Panc1 (cell line): ENCODE measurements at regions of chr5 and their contacts with region 1.

Region 1: GRCh38 chr5:40688127-40688761 is 8.5 kb downstream of the PTGER4 start:
- DNase-seq: peak; percentile 95
- ATAC-seq: peak; percentile 85
- H3K4me3 ChIP-seq: peak overlapping the region in 1 of 2 experiments; percentile 40; a peak in 2 of 4 replicates
- H3K27ac ChIP-seq: peak overlapping the region; percentile 90
- H3K4me1 ChIP-seq: peaks cover 62% of the 10 kb centered on the region
- H3K27me3 ChIP-seq: no peaks in the 10 kb centered on the region
- CTCF ChIP-seq: peak; percentile 86

Region 2: GRCh38 chr5:39580702-39581453 is 1107.4 kb before region 1 on chr5:
- CTCF ChIA-PET with region 1: no interaction called
- POLR2A ChIA-PET with region 1: no interaction called
- in situ Hi-C with region 1: no loop called
- intact Hi-C with region 1: loop called (anchors 5 kb)
- DNase-seq: no peak
- ATAC-seq: no peak
- H3K4me3 ChIP-seq: no peak overlapping the region
- H3K27ac ChIP-seq: no peak overlapping the region
- H3K4me1 ChIP-seq: no peaks in the 10 kb centered on the region
- H3K27me3 ChIP-seq: peaks cover 2% of the 10 kb centered on the region; the same call in 1 of the 2 replicates
- CTCF ChIP-seq: no peak

Region 3: DNA sequence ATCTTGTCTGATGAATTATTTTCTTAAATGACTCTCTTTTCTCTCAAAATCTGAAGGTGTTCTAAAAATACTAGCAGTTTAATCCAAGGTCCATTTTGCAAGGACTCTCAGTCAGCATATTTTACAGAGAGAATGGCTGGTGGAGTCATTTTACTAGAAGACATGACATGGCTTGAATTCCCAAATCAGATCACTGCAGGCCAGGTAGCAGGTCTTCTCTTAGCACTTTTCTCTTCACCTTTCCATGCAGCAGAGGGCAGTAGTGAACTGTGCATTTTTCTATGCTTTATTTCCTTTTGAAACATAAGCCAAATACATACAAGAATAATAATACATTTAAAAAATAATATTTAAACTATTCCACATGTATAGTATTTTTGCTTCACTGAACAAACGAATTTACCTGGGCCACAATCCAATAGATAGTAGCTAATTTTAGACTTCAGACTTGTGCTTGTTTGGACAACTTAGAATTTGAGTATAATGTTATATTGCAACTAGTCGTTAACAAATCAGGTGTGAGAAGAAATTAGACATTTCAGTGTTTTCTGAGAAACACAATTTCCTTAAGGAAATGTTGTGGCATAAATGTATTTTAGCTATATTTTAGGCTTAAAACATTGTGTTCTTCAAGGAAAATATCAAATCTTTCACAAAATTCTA is 974.1 kb before region 1 on chr5:
- CTCF ChIA-PET with region 1: interaction called, 4 read pairs
- POLR2A ChIA-PET with region 1: no interaction called
- in situ Hi-C with region 1: no loop called
- intact Hi-C with region 1: loop called (anchors 2 kb)
- DNase-seq: peak; percentile 99
- ATAC-seq: peak; percentile 70
- H3K4me3 ChIP-seq: no peak overlapping the region
- H3K27ac ChIP-seq: peak overlapping the region; percentile 65
- H3K4me1 ChIP-seq: peaks cover 16% of the 10 kb centered on the region
- H3K27me3 ChIP-seq: no peaks in the 10 kb centered on the region
- CTCF ChIP-seq: peak; percentile 80

Region 4: DNA sequence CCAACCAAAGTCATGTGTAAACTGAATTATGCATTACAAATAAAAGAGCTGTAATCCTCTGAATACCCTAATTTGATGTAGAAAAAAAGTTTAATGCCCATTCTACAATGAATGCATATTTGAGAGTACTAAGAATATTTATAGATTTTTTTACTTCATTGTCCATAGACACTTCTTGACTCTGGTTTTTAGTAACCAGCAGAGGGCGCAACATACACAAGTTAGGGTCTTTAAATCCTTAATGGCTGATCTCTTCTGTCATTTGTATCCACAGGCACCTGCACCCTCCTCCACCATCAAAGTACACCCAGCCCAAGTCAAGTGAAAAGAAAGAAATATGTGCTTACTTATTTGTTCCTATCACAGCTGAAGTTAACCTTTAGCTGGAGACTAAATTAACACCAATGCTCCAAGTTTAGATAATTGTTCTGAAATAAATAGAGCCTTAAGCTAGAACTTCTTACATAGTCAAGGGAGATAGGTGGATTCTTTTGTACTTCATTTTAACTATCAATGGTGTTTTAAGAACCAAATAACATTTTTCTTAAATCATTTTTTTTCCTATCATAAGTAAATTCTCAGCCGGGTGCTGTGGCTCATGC is 739.3 kb before region 1 on chr5:
- CTCF ChIA-PET with region 1: no interaction called
- POLR2A ChIA-PET with region 1: no interaction called
- in situ Hi-C with region 1: no loop called
- intact Hi-C with region 1: loop called (anchors 1 kb)
- DNase-seq: peak; percentile 73
- ATAC-seq: peak; percentile 94
- H3K4me3 ChIP-seq: no peak overlapping the region
- H3K27ac ChIP-seq: no peak overlapping the region
- H3K4me1 ChIP-seq: no peaks in the 10 kb centered on the region
- H3K27me3 ChIP-seq: no peaks in the 10 kb centered on the region
- CTCF ChIP-seq: peak; percentile 73; the same call in 1 of the 2 replicates

Region 5: DNA sequence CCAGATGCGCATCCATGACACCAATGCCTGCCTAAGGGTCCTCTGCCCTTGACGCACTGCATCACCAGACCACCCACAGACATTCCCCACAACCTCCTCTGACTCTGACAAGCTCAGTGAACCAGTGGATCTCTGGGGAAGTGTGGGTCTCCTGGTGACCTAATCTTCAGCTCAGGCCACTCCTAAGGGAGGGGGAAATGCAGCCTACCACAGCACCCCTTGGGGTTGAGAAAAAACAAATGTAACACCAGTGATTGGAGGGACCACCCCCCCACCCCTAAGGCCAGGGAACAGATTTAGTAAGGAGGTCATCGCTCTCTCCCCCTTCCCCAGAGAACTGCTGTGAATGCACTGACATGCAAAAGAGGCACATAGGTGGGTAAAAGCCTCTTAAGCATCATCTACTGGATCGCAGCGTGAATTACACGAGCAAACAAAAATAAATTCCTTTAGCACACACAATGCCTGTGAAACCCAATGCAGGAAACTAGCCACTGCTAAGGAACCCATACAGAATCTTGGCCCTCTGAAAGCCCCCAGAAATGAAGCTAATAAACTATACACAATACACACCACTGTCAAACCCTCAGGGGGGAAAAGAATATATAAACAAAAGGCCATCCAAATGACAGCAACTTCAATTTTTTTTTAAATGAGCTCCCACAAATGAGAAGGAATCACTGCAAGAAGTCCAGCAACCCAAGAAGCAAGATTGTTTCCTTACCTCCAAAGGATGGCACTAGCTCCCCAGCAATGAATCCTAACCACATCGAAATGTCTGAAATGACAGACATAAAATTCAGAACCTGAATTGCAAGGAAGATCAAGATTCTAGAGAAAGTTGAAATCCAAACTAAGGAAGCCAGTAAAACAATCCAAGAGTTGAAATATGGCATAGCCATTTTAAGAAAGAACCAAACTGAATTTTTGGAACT is 522.2 kb before region 1 on chr5:
- CTCF ChIA-PET with region 1: no interaction called
- POLR2A ChIA-PET with region 1: no interaction called
- in situ Hi-C with region 1: no loop called
- intact Hi-C with region 1: loop called (anchors 10 kb)
- DNase-seq: no peak
- ATAC-seq: no peak
- H3K4me3 ChIP-seq: no peak overlapping the region
- H3K27ac ChIP-seq: no peak overlapping the region
- H3K4me1 ChIP-seq: no peaks in the 10 kb centered on the region
- H3K27me3 ChIP-seq: no peaks in the 10 kb centered on the region
- CTCF ChIP-seq: peak; percentile 37; the same call in 1 of the 2 replicates

Region 6: DNA sequence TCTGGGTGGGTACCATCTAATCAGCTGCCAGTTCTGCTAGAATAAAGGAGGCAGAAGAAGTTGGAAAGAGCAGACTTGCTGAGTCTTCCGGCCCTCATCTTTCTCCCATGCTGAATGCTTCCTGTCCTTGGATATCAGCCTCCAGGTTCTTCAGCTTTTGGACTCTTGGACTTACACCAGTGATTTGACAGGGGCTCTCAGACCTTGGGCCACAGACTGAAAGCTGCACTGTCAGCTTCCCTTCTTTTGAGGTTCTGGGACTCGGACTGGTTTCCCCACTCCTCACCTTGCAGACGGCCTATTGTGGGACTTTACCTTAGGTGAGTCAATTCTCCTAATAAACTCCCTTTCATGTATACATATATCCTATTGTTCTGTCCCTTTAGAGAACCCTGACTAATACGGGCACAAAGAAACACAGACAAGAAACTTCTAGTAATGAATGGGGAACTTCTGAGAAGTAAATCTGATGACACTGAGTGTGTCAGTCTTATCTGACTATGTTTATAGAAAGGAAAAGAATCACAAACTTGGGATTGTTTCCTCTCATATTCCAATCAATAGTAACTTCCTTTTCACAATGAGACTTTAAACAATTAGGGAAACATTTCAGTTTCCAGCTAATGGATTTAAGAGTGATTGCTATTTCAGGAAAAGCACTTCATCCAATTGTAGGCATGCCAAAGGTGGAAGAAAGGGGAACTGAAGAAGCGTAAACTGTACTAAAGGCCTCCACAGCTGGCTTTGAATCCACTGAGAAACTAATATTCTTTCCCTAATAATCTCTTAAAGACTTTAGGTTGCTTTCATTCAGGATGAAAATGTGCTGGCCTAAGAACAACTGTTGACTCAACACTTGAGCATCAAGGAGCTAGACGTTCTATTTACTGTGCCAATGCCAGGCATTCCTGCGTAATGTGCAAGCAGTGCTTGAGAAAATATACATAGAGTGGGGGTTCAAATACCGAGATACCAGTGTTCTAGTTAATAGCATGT is 136.4 kb before region 1 on chr5:
- CTCF ChIA-PET with region 1: no interaction called
- POLR2A ChIA-PET with region 1: no interaction called
- in situ Hi-C with region 1: no loop called
- intact Hi-C with region 1: loop called (anchors 5 kb)
- DNase-seq: peak; percentile 95
- ATAC-seq: peak; percentile 99
- H3K4me3 ChIP-seq: no peak overlapping the region
- H3K27ac ChIP-seq: peak overlapping the region; percentile 83
- H3K4me1 ChIP-seq: peaks cover 27% of the 10 kb centered on the region
- H3K27me3 ChIP-seq: no peaks in the 10 kb centered on the region
- CTCF ChIP-seq: no peak

Region 7: DNA sequence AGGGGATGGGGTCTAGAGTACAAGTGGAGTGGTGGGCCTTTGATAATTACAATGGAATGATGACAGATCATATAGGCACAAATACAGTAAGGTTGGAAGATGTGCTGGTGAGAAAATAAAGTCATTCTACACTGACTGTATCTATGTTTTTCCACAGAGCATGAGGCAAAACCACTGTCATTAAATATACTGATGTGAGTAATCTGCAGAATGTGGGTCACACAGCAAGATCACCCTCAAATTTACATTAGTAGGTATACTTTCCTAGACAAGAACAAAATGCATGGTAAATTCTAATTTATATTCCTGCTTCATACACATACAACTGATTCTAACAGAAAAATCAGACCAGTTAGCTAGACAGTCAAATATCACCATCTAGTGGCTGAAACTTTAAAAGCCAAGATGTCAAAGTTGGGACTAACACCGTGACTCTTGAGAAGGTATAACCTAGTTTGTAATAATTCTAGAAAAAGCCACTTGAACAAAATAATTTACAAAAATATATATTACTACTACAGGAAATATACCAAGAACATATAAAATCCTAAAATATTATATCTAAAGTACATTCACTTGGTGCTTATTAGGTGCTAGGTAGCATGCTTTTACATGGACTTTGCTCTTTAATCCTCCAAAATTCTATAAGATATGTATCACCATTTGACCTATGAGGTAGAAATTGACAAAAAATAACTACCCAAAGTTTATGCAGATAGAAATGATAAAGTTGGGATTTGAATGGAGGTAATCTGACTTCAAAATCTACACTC is 48.0 kb after region 1 on chr5:
- CTCF ChIA-PET with region 1: no interaction called
- POLR2A ChIA-PET with region 1: no interaction called
- in situ Hi-C with region 1: no loop called
- intact Hi-C with region 1: loop called (anchors 5 kb)
- DNase-seq: peak; percentile 80
- ATAC-seq: peak; percentile 84
- H3K4me3 ChIP-seq: no peak overlapping the region
- H3K27ac ChIP-seq: no peak overlapping the region
- H3K4me1 ChIP-seq: no peaks in the 10 kb centered on the region
- H3K27me3 ChIP-seq: no peaks in the 10 kb centered on the region
- CTCF ChIP-seq: peak; percentile 78; the same call in 1 of the 2 replicates